ENCODE measurements at regions of chr11 and their contacts with region 1.

Region 1: DNA sequence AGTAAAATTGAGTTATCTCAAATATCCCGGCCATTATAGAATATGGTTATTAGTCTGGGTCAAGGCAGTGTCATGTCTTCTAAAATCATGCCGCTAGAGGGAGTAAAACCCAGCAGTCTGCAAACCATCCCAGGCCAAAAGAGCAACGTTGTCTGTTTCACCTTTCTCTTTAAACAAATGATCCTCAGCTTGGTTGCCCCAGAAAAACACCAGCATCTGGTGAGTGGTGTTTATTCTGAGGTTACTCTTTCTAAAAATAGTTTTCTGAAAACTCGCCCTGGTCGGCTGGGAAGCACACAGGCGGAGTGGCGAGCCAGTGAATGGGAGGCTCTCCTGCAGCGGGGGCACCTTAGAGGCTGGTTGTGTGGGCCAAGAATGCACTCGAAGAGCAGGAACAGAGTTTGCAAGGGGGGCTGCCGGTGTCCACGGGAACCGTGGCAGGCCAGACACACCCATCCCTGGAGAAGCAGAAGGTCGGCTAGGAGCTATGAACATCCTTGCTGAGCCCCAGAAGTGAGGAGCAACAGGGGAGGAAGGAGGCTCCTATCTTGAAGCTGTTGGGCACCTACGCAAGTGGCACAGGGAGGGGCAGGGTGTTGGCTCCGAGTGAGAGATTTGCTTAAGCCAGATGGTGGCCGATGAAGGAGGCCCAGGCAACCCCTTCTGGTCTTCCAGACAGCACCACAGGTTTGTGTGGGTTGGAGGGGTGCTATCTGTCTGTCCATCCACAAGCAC is 297.1 kb downstream of the ETS1 start:
- DNase-seq: peak; percentile 51 to 93 (median 66)
- ATAC-seq: peak; percentile 73
- H3K4me3 ChIP-seq: peak overlapping the region; percentile 50
- H3K4me3 Mint-ChIP-seq: peak overlapping the region; percentile 90
- H3K27ac ChIP-seq: peak overlapping the region; percentile 87 to 95
- H3K27ac Mint-ChIP-seq: peak overlapping the region; percentile 100
- H3K4me1 ChIP-seq: peaks cover 77% of the 10 kb centered on the region
- H3K4me1 Mint-ChIP-seq: peaks cover 100% of the 10 kb centered on the region
- H3K27me3 ChIP-seq: no peaks in the 10 kb centered on the region
- H3K27me3 Mint-ChIP-seq: no peaks in the 10 kb centered on the region
- CTCF ChIP-seq: peak; percentile 94

Region 2: GRCh38 chr11:128172046-128172878 is 118.0 kb before region 1 on chr11:
- CTCF ChIA-PET with region 1: interaction called, 3 read pairs
- POLR2A ChIA-PET with region 1: interaction called, 4 read pairs
- intact Hi-C with region 1: loop called in 1 of 2 experiments (anchors 2 kb)
- DNase-seq: peak; percentile 73 to 92 (median 84)
- ATAC-seq: peak; percentile 83
- H3K4me3 ChIP-seq: no peak overlapping the region
- H3K4me3 Mint-ChIP-seq: no peak overlapping the region
- H3K27ac ChIP-seq: no peak overlapping the region
- H3K27ac Mint-ChIP-seq: no peak overlapping the region
- H3K4me1 ChIP-seq: no peaks in the 10 kb centered on the region
- H3K4me1 Mint-ChIP-seq: peaks cover 6% of the 10 kb centered on the region
- H3K27me3 ChIP-seq: no peaks in the 10 kb centered on the region
- H3K27me3 Mint-ChIP-seq: no peaks in the 10 kb centered on the region
- CTCF ChIP-seq: peak; percentile 91

Region 3: GRCh38 chr11:128323381-128323780 is 33.1 kb after region 1 on chr11:
- CTCF ChIA-PET with region 1: interaction called, 37 read pairs
- POLR2A ChIA-PET with region 1: interaction called, 27 read pairs
- intact Hi-C with region 1: loop called (anchors 1 to 5 kb)
- DNase-seq: peak in 6 of 14 experiments; percentile 37 to 83 (median 66)
- ATAC-seq: peak; percentile 10
- H3K4me3 ChIP-seq: no peak overlapping the region
- H3K4me3 Mint-ChIP-seq: peak overlapping the region; percentile 47
- H3K27ac ChIP-seq: peak overlapping the region; percentile 89 to 91
- H3K27ac Mint-ChIP-seq: peak overlapping the region; percentile 93
- H3K4me1 ChIP-seq: peaks cover 85% of the 10 kb centered on the region
- H3K4me1 Mint-ChIP-seq: peaks cover 84% of the 10 kb centered on the region
- H3K27me3 ChIP-seq: no peaks in the 10 kb centered on the region
- H3K27me3 Mint-ChIP-seq: no peaks in the 10 kb centered on the region
- CTCF ChIP-seq: peak; percentile 52

Region 4: GRCh38 chr11:128391811-128392210 is 101.5 kb after region 1 on chr11:
- CTCF ChIA-PET with region 1: no interaction called
- POLR2A ChIA-PET with region 1: no interaction called
- intact Hi-C with region 1: no loop called
- DNase-seq: no peak
- ATAC-seq: no peak
- H3K4me3 ChIP-seq: no peak overlapping the region
- H3K4me3 Mint-ChIP-seq: no peak overlapping the region
- H3K27ac ChIP-seq: no peak overlapping the region
- H3K27ac Mint-ChIP-seq: no peak overlapping the region
- H3K4me1 ChIP-seq: no peaks in the 10 kb centered on the region
- H3K4me1 Mint-ChIP-seq: peaks cover 34% of the 10 kb centered on the region
- H3K27me3 ChIP-seq: no peaks in the 10 kb centered on the region
- H3K27me3 Mint-ChIP-seq: no peaks in the 10 kb centered on the region
- CTCF ChIP-seq: no peak

Region 5: GRCh38 chr11:128422576-128423370 is 132.5 kb after region 1 on chr11:
- CTCF ChIA-PET with region 1: interaction called, 21 read pairs
- POLR2A ChIA-PET with region 1: interaction called, 7 read pairs
- intact Hi-C with region 1: loop called in 1 of 2 experiments (anchors 5 kb)
- DNase-seq: peak; percentile 64 to 96 (median 82)
- ATAC-seq: peak; percentile 92
- H3K4me3 ChIP-seq: peak overlapping the region; percentile 13
- H3K4me3 Mint-ChIP-seq: peak overlapping the region; percentile 74
- H3K27ac ChIP-seq: peak overlapping the region in 1 of 2 donors; percentile 24
- H3K27ac Mint-ChIP-seq: peak overlapping the region; percentile 96
- H3K4me1 ChIP-seq: peaks cover 37% of the 10 kb centered on the region
- H3K4me1 Mint-ChIP-seq: peaks cover 75% of the 10 kb centered on the region
- H3K27me3 ChIP-seq: no peaks in the 10 kb centered on the region
- H3K27me3 Mint-ChIP-seq: no peaks in the 10 kb centered on the region
- CTCF ChIP-seq: no peak

Region 6: GRCh38 chr11:128472128-128473089 is 182.1 kb after region 1 on chr11:
- CTCF ChIA-PET with region 1: interaction called, 8 read pairs
- POLR2A ChIA-PET with region 1: interaction called, 212 read pairs
- intact Hi-C with region 1: no loop called
- DNase-seq: peak in 6 of 14 experiments; percentile 41 to 79 (median 64)
- ATAC-seq: peak; percentile 19
- H3K4me3 ChIP-seq: peak overlapping the region; percentile 37
- H3K4me3 Mint-ChIP-seq: peak overlapping the region; percentile 64
- H3K27ac ChIP-seq: peak overlapping the region; percentile 92 to 94
- H3K27ac Mint-ChIP-seq: peak overlapping the region; percentile 99
- H3K4me1 ChIP-seq: peaks cover 90% of the 10 kb centered on the region
- H3K4me1 Mint-ChIP-seq: peaks cover 99% of the 10 kb centered on the region
- H3K27me3 ChIP-seq: no peaks in the 10 kb centered on the region
- H3K27me3 Mint-ChIP-seq: no peaks in the 10 kb centered on the region
- CTCF ChIP-seq: no peak

Region 7: DNA sequence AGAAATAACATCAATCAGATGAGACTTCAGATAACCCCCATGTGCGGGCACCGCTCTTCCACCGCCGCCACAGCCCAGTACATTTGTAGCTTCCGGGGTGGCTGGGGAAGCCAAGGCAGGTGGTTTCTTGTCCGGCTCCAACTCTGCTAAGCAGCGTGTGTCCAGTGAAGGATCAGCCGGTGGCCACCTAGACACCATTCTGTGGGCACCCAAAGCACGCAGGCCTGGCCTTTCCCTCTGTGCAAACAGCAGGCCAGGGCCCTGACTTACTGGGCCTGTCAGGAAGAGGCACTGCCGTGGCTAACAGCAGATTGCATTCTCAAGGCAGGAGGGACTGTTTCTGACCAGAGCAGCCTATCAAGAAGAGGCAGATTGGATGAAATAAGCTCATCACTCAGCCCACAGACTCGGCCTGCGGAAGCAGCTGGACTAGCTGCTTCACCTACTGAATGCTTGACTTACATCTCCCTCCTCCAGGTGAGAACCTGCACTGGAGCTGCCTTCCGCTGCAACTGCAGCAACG is 222.3 kb after region 1 on chr11:
- CTCF ChIA-PET with region 1: interaction called, 10 read pairs
- POLR2A ChIA-PET with region 1: interaction called, 129 read pairs
- intact Hi-C with region 1: no loop called
- DNase-seq: peak in 5 of 14 experiments; percentile 42 to 61 (median 59)
- ATAC-seq: peak; percentile 7
- H3K4me3 ChIP-seq: peak overlapping the region; percentile 89
- H3K4me3 Mint-ChIP-seq: peak overlapping the region; percentile 93
- H3K27ac ChIP-seq: peak overlapping the region; percentile 43 to 93
- H3K27ac Mint-ChIP-seq: peak overlapping the region; percentile 99
- H3K4me1 ChIP-seq: peaks cover 55% of the 10 kb centered on the region
- H3K4me1 Mint-ChIP-seq: peaks cover 92% of the 10 kb centered on the region
- H3K27me3 ChIP-seq: no peaks in the 10 kb centered on the region
- H3K27me3 Mint-ChIP-seq: no peaks in the 10 kb centered on the region
- CTCF ChIP-seq: no peak

Region 8: GRCh38 chr11:128630367-128631230 is 340.3 kb after region 1 on chr11:
- CTCF ChIA-PET with region 1: interaction called, 35 read pairs
- POLR2A ChIA-PET with region 1: interaction called, 38 read pairs
- intact Hi-C with region 1: loop called (anchors 1 kb)
- DNase-seq: peak; percentile 85 to 98 (median 92)
- ATAC-seq: peak; percentile 79
- H3K4me3 ChIP-seq: no peak overlapping the region
- H3K4me3 Mint-ChIP-seq: peak overlapping the region; percentile 62
- H3K27ac ChIP-seq: peak overlapping the region; percentile 56 to 70
- H3K27ac Mint-ChIP-seq: peak overlapping the region; percentile 97
- H3K4me1 ChIP-seq: peaks cover 65% of the 10 kb centered on the region
- H3K4me1 Mint-ChIP-seq: peaks cover 69% of the 10 kb centered on the region
- H3K27me3 ChIP-seq: no peaks in the 10 kb centered on the region
- H3K27me3 Mint-ChIP-seq: no peaks in the 10 kb centered on the region
- CTCF ChIP-seq: peak; percentile 89

Measured in CD4-positive, alpha-beta T cell (primary cell).